Right ventricle myocardium inferior (tissue), 1 donor: ENCODE measurements at regions of chr10 and their contacts with region 1.

Region 1: DNA sequence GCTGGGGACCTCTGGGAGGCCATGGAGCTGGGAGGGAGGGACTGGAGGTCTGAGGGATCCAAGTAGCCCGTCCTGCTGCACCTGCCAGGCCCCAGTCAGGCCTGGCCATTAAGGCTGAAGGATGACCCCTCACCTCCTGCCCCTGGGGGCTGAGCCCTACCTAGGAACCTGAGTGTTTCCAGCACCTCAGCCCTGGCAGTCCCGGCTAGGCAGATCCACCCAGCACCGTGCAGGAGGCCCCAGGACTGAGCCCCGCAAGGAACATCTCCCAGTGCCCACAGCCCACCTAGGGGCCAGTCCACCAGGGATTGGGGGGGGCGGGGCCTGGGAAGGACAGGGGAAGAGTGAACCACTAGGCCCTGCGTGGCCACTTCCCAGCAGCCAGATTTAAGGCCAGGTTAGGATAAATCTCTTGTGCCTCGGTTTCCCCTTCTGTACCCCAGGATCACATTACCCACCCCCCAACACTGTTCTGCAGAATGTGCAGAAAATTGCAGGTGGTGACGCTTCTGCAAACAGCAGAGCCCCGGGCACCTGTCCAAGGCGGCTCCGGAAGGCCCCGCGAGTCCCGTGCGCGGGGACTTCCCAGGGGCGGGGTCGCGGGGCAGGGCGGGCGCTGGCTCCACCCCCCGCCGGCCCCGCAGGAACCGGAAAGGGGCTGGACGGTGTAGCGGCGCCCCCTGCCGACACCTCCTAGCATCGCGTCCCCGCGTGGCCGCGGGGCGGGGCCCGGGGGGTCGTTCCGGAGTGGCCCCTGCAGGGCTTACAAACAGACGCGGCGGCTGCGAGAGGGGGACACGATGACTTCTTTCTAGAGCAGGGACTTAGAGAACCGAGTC is 55.9 kb downstream of the PWWP2B start:
- DNase-seq: peak; percentile 88
- ATAC-seq: peak; percentile 84

Region 2: GRCh38 chr10:132387764-132388210 is 65.1 kb before region 1 on chr10:
- intact Hi-C with region 1: loop called (anchors 1 kb)
- DNase-seq: peak; percentile 89
- ATAC-seq: peak; percentile 56

Region 3: GRCh38 chr10:132489087-132489703 is 36.3 kb after region 1 on chr10:
- intact Hi-C with region 1: no loop called
- DNase-seq: peak; percentile 53
- ATAC-seq: no peak